Activated CD4-positive, alpha-beta memory T cell treated with anti-CD3 and anti-CD28 coated beads for 36 hours (primary cell): ENCODE measurements at regions of chr7 and their contacts with region 1.

Region 1: GRCh38 chr7:97117372-97118188 is at the start of gene SDHAF3:
- DNase-seq: peak; percentile 99
- H3K4me3 Mint-ChIP-seq: peak within 1 kb of the TSS; percentile 89
- H3K27ac Mint-ChIP-seq: peak within 1 kb of the TSS; percentile 87
- H3K4me1 Mint-ChIP-seq: peaks cover 27% of the 10 kb centered on the region
- H3K27me3 Mint-ChIP-seq: no peaks in the 10 kb centered on the region
- total RNA-seq, gene SDHAF3: 21.8 to 24.5 TPM

Region 2: DNA sequence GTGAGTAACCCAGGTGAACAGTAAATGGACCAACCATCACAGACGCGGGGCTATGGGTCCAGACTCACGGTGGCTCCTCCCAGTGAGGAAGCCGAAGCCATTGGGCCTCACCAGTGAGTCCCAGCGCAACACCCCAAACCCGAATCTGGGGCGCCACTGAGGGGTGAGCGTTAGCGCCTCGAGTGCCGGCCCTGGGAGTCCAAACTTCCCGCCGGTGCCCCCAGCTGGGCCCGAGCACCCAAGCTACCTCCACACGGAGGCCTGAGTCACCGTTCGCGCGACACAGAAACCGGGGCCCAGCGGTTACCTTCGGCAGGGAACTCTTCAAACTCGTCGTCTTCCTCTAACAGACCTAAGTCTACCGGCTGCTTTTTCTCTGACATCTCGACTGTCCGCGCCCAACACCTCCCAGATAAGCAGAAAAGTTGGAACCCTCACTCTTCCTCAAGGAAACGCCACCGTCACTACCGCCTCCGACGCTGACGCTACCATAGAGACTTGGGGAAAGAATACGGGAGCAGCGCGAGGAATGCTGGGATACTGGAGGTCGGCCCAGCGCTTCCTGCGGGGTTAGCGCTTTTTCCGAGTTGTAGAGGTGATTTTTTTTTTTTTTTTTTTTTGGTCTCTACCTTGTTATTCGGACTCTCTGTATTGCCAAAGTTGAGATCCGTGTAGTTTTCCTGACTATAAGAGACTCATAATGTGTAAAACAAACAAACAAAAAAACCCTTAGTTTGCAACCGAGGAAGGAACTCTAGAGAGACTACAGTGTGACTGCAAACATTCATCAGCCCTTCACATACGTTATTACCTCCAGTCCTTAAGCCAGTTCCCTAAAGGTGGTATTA is 408.0 kb before region 1 on chr7 and contains the start of gene SEM1:
- CTCF ChIA-PET with region 1: no interaction called
- POLR2A ChIA-PET with region 1: no interaction called
- intact Hi-C with region 1: loop called (anchors 2 kb)
- DNase-seq: peak; percentile 76
- H3K4me3 Mint-ChIP-seq: peak within 1 kb of the TSS; percentile 98
- H3K27ac Mint-ChIP-seq: peak within 1 kb of the TSS; percentile 96
- H3K4me1 Mint-ChIP-seq: peaks cover 23% of the 10 kb centered on the region
- H3K27me3 Mint-ChIP-seq: peaks cover 2% of the 10 kb centered on the region
- total RNA-seq, gene SEM1: 41.6 to 42.4 TPM

Region 3: GRCh38 chr7:97090761-97091353 is 26.7 kb before region 1 on chr7:
- CTCF ChIA-PET with region 1: no interaction called
- POLR2A ChIA-PET with region 1: no interaction called
- intact Hi-C with region 1: no loop called
- DNase-seq: no peak
- H3K4me3 Mint-ChIP-seq: no peak overlapping the region
- H3K27ac Mint-ChIP-seq: no peak overlapping the region
- H3K4me1 Mint-ChIP-seq: no peaks in the 10 kb centered on the region
- H3K27me3 Mint-ChIP-seq: peaks cover 14% of the 10 kb centered on the region

Region 4: GRCh38 chr7:97167176-97167575 is 49.6 kb after region 1 on chr7:
- CTCF ChIA-PET with region 1: interaction called, 3 read pairs
- POLR2A ChIA-PET with region 1: no interaction called
- intact Hi-C with region 1: loop called (anchors 1 kb)
- DNase-seq: no peak
- H3K4me3 Mint-ChIP-seq: no peak overlapping the region
- H3K27ac Mint-ChIP-seq: peak overlapping the region; percentile 2
- H3K4me1 Mint-ChIP-seq: peaks cover 26% of the 10 kb centered on the region
- H3K27me3 Mint-ChIP-seq: no peaks in the 10 kb centered on the region

Region 5: DNA sequence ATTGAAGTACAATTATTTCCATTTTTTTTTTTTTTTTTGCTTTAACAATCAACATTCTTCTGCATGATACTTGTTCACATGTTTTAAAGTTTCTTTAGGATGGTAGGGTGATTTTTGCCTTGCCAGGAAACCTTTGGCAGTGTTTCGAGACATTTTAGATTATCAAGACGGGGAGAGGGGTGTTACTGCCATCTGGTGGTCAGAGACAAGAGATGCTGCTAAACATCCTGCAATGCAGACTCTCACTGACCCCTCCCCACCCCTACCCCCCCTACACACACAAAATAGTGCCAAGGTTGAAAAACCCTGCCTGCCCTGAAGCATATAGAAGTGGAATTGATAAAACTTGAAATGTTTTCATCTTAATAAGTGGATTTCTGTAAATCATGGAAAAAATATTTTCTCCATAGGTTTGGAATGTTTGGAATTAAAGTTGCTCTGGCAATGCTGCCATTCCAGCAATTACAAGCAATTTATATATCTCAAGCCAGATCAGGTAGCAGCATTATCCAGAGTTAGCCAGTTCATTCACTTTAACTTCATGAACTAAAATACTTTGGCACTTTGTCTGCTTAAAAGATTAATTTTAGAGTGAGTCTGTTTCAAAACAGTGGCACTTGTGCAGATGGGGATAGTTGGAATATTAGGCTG is 62.0 kb after region 1 on chr7:
- CTCF ChIA-PET with region 1: interaction called, 5 read pairs
- POLR2A ChIA-PET with region 1: no interaction called
- intact Hi-C with region 1: loop called (anchors 1 kb)
- DNase-seq: peak; percentile 54
- H3K4me3 Mint-ChIP-seq: no peak overlapping the region
- H3K27ac Mint-ChIP-seq: no peak overlapping the region
- H3K4me1 Mint-ChIP-seq: peaks cover 3% of the 10 kb centered on the region
- H3K27me3 Mint-ChIP-seq: no peaks in the 10 kb centered on the region

Region 6: GRCh38 chr7:97872025-97872669 is 754.6 kb after region 1 on chr7 and contains the start of gene ASNS:
- CTCF ChIA-PET with region 1: no interaction called
- POLR2A ChIA-PET with region 1: interaction called, 16 read pairs
- intact Hi-C with region 1: loop called (anchors 1 kb)
- DNase-seq: peak; percentile 96
- H3K4me3 Mint-ChIP-seq: peak within 1 kb of the TSS; percentile 86
- H3K27ac Mint-ChIP-seq: peak within 1 kb of the TSS; percentile 91
- H3K4me1 Mint-ChIP-seq: peaks cover 19% of the 10 kb centered on the region
- H3K27me3 Mint-ChIP-seq: no peaks in the 10 kb centered on the region
- total RNA-seq, gene ASNS: 200 to 214 TPM

Region 7: GRCh38 chr7:97971990-97972943 is 854.7 kb after region 1 on chr7:
- CTCF ChIA-PET with region 1: no interaction called
- POLR2A ChIA-PET with region 1: no interaction called
- intact Hi-C with region 1: loop called (anchors 2 kb)
- DNase-seq: peak; percentile 91
- H3K4me3 Mint-ChIP-seq: peak overlapping the region; percentile 96
- H3K27ac Mint-ChIP-seq: peak overlapping the region; percentile 94
- H3K4me1 Mint-ChIP-seq: peaks cover 26% of the 10 kb centered on the region
- H3K27me3 Mint-ChIP-seq: no peaks in the 10 kb centered on the region